ENCODE measurements at regions of chr21 and their contacts with region 1.

Region 1: GRCh38 chr21:26715878-26716506 is 129.2 kb downstream of the ADAMTS1 start:
- DNase-seq: peak; percentile 35
- H3K4me3 ChIP-seq: no peak overlapping the region
- H3K27ac ChIP-seq: no peak overlapping the region
- H3K4me1 ChIP-seq: no peaks in the 10 kb centered on the region
- H3K27me3 ChIP-seq: no peaks in the 10 kb centered on the region
- CTCF ChIP-seq: peak; percentile 26 to 83 (median 64)
- EP300 ChIP-seq: no peak
- POLR2A ChIP-seq: no peak

Region 2: DNA sequence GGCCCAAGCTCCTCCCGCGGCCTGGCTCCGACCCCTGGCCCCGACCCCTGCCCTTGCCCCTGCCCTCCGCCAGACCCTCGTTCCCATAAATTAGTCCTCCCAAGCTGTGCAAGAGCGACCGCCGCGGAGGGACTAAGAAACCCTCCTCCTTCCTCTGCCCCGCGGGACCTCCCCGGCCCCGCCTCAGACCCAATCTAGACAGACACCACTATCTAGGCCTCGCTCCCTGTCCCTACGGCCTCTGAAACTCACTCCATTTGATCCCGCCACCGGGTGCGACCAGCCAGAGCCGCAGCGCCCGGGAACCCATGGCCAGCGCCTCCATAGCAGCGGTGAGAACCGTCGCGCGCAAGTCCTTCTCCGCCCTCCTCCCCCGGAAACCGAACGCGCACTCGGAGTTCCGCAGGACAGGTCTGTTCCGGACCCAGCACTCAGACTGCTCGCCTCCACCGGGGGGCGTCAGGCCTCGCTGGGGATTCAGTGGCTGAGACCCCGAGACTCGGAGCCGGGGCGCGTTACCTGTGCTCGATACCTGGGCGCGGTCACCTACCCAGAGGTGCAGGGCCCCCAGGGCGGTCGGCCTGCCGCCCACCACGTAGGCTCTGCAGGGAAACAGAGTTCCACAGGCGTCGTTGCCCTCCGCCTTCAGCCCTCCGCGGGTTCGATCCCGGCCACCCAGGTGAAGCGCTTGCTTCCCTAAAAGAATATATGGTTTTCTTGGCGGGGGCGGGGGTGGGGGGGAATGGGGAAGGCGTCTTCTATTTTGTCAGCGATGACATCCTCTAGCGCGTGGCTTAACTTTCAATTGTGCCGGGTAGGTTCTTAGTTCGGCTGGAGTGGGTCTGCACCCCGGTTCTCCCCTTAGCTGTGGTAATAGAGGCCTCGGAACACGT is 1108.6 kb before region 1 on chr21 and contains the start of gene MRPL39:
- in situ Hi-C with region 1: loop called in 3 of 4 experiments (anchors 25 kb)
- intact Hi-C with region 1: no loop called
- DNase-seq: peak; percentile 89
- H3K4me3 ChIP-seq: peak within 1 kb of the TSS; percentile 70 to 95 (median 74)
- H3K27ac ChIP-seq: peak within 1 kb of the TSS; percentile 78 to 88 (median 84)
- H3K4me1 ChIP-seq: peaks cover 9 to 31% (median 11%) of the 10 kb centered on the region in 4 donors
- H3K27me3 ChIP-seq: no peaks in the 10 kb centered on the region
- CTCF ChIP-seq: peak; percentile 36 to 71 (median 50)
- EP300 ChIP-seq: no peak
- POLR2A ChIP-seq: peak; percentile 55
- total RNA-seq, gene MRPL39: 10.1 to 16.8 (median 14.9) TPM in 3 of 4 donors, not detected in the other

Region 3: GRCh38 chr21:25790122-25790877 is 925.7 kb before region 1 on chr21:
- in situ Hi-C with region 1: loop called in 1 of 4 experiments (anchors 25 kb)
- intact Hi-C with region 1: no loop called
- DNase-seq: no peak
- H3K4me3 ChIP-seq: peak overlapping the region in 3 of 4 donors; percentile 19 to 42 (median 30)
- H3K27ac ChIP-seq: peak overlapping the region; percentile 59 to 75 (median 70)
- H3K4me1 ChIP-seq: peaks cover 0 to 13% (median 0%) of the 10 kb centered on the region in 4 donors
- H3K27me3 ChIP-seq: no peaks in the 10 kb centered on the region
- CTCF ChIP-seq: peak; percentile 31 to 39 (median 36)
- EP300 ChIP-seq: no peak
- POLR2A ChIP-seq: no peak

Region 4: DNA sequence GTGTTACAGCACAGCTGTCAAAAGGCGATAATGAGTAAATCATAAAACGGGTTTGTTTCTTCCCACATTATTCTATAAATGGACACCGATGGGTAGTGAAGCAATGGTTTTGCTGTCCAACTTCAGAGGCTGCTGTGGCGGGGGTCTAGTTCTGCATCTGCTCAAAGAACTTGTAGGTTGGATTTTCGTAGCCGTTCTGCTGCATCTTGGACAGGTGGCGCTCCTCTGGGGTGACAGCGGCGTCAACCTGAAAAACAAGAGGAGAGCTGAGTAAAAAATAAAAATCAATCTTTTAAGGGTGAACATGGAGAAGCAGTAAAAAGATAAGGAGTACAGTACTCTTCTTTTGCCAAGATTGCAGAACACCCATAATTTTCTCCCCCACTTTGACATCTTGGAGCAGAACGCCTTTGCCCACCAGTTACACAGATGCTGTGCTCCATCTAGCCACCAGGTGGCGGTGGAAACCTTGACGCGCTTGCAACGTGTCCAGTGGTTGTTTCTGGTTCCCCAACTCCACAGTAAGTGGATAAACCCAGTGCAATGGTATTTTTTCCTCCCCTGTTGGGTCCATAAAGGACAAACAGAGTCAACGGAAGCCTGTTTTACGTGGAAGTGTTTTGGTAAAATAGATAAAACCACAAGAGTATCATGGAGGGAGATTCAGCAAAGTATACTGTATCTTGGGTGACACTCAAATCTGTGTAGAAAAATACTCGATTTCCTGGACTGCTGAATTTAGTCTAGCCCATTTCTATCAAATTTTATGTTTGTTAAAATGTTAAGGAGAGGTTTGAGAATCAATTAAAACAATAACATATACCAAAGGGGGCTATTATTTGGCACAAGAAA is 834.2 kb before region 1 on chr21:
- in situ Hi-C with region 1: loop called in 2 of 4 experiments (anchors 25 kb)
- intact Hi-C with region 1: loop called (anchors 10 kb)
- DNase-seq: peak; percentile 69
- H3K4me3 ChIP-seq: no peak overlapping the region
- H3K27ac ChIP-seq: no peak overlapping the region
- H3K4me1 ChIP-seq: peaks cover 0 to 24% (median 11%) of the 10 kb centered on the region in 4 donors
- H3K27me3 ChIP-seq: no peaks in the 10 kb centered on the region
- CTCF ChIP-seq: peak; percentile 84 to 96 (median 90)
- EP300 ChIP-seq: no peak
- POLR2A ChIP-seq: no peak

Region 5: GRCh38 chr21:26177187-26177586 is 538.8 kb before region 1 on chr21:
- in situ Hi-C with region 1: loop called in 1 of 4 experiments (anchors 25 kb)
- intact Hi-C with region 1: no loop called
- DNase-seq: no peak
- H3K4me3 ChIP-seq: no peak overlapping the region
- H3K27ac ChIP-seq: no peak overlapping the region
- H3K4me1 ChIP-seq: no peaks in the 10 kb centered on the region
- H3K27me3 ChIP-seq: no peaks in the 10 kb centered on the region
- CTCF ChIP-seq: no peak
- EP300 ChIP-seq: no peak
- POLR2A ChIP-seq: no peak